B cell (primary cell): ENCODE measurements at regions of chr17 and their contacts with region 1.

Region 1: DNA sequence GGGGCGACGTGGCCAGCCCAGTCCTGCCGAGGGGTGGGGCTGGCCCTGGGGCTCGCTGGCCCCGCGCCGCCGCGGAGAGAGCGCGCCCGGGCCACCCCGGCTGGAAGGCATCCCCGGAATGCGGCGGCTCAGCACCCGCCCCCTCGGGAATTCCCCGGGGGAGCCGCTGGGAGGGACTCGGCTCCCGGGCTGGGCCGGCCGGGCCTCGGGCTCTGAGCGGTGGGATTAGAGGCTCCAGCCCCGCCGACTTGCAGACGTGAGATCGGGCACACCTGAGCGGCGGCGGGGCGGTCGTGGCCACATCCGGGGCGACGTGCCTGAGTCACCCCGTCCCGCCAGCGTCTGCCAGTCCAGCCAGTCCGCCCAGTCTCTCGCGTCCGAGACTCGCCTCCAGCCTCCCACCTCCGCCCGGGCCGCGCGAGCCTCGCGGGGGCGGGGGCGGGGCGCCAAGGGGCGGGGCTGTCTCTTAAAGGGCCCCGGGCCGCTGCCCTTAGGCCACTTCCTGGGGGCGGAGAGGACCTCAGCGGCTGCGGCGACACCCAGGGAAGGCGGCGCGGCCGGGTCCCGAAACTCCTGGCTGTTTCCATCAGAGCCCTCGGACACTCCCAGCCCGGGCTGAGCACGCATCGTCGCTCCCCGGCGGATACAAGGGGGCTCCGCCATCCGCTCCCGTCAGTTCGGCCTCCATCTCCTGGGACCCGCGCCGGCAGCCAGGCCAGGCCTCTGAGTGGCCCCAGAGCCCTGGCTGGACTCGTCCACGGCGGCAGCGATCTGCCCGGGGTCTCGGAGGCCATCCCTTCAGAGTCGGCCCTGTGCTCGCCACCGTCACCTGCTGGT is at the start of gene KCTD11:
- DNase-seq: peak; percentile 78
- ATAC-seq: peak; percentile 67
- H3K4me3 ChIP-seq: peak within 1 kb of the TSS; percentile 35 to 92 (median 84)
- H3K4me3 Mint-ChIP-seq: peak within 1 kb of the TSS; percentile 94
- H3K27ac ChIP-seq: peak within 1 kb of the TSS; percentile 63 to 90
- H3K27ac Mint-ChIP-seq: peak within 1 kb of the TSS; percentile 91
- H3K4me1 ChIP-seq: peaks cover 14 to 41% of the 10 kb centered on the region in 2 donors
- H3K4me1 Mint-ChIP-seq: peaks cover 38% of the 10 kb centered on the region
- H3K27me3 ChIP-seq: no peaks in the 10 kb centered on the region
- H3K27me3 Mint-ChIP-seq: no peaks in the 10 kb centered on the region
- CTCF ChIP-seq: peak; percentile 50
- total RNA-seq, gene KCTD11: 13.4 and 15.4 TPM in 2 replicates

Region 2: DNA sequence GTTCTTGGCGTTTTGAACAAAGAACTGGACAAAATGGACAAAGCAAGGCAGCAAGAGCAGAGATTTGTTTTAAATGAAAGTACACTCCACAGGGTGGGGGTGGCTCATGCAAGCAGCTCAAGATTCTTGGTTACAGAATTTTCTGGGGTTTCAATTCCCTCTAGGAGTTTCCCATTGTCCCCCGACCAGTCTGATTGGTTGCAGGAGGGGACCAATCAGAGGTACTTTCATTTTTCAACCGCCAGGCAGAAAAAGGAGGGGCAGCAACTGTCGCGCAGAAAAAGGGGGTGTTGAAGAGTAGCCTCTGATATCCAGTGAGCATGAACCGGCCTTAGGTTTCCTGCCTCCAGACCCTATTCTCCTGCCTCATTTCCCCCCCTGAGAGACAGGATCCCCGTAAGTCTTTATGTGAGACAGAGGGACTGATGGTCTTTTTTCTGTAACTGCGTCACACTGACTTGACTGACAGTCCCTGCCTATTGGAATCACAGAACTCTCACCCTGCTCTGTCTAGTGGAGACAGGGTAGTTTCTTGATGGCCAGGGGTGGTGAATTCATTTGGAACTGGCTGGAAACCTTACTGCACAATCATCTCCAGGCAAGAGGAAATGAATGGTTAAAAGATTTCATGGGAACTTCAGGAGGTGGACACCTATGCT is 415.4 kb before region 1 on chr17:
- CTCF ChIA-PET with region 1: no interaction called
- POLR2A ChIA-PET with region 1: no interaction called
- intact Hi-C with region 1: no loop called
- DNase-seq: peak; percentile 63
- ATAC-seq: peak; percentile 83
- H3K4me3 ChIP-seq: peak overlapping the region in 4 of 5 experiments; percentile 31 to 53 (median 40)
- H3K4me3 Mint-ChIP-seq: peak overlapping the region; percentile 64
- H3K27ac ChIP-seq: peak overlapping the region; percentile 72 to 78
- H3K27ac Mint-ChIP-seq: peak overlapping the region; percentile 84
- H3K4me1 ChIP-seq: no peaks in the 10 kb centered on the region
- H3K4me1 Mint-ChIP-seq: peaks cover 6% of the 10 kb centered on the region
- H3K27me3 ChIP-seq: no peaks in the 10 kb centered on the region
- H3K27me3 Mint-ChIP-seq: no peaks in the 10 kb centered on the region
- CTCF ChIP-seq: no peak

Region 3: GRCh38 chr17:7186241-7186640 is 165.6 kb before region 1 on chr17:
- CTCF ChIA-PET with region 1: no interaction called
- POLR2A ChIA-PET with region 1: no interaction called
- intact Hi-C with region 1: no loop called
- DNase-seq: peak; percentile 16
- ATAC-seq: no peak
- H3K4me3 ChIP-seq: no peak overlapping the region
- H3K4me3 Mint-ChIP-seq: no peak overlapping the region
- H3K27ac ChIP-seq: no peak overlapping the region
- H3K27ac Mint-ChIP-seq: no peak overlapping the region
- H3K4me1 ChIP-seq: no peaks in the 10 kb centered on the region
- H3K4me1 Mint-ChIP-seq: peaks cover 3% of the 10 kb centered on the region
- H3K27me3 ChIP-seq: no peaks in the 10 kb centered on the region
- H3K27me3 Mint-ChIP-seq: peaks cover 8% of the 10 kb centered on the region
- CTCF ChIP-seq: no peak

Region 4: DNA sequence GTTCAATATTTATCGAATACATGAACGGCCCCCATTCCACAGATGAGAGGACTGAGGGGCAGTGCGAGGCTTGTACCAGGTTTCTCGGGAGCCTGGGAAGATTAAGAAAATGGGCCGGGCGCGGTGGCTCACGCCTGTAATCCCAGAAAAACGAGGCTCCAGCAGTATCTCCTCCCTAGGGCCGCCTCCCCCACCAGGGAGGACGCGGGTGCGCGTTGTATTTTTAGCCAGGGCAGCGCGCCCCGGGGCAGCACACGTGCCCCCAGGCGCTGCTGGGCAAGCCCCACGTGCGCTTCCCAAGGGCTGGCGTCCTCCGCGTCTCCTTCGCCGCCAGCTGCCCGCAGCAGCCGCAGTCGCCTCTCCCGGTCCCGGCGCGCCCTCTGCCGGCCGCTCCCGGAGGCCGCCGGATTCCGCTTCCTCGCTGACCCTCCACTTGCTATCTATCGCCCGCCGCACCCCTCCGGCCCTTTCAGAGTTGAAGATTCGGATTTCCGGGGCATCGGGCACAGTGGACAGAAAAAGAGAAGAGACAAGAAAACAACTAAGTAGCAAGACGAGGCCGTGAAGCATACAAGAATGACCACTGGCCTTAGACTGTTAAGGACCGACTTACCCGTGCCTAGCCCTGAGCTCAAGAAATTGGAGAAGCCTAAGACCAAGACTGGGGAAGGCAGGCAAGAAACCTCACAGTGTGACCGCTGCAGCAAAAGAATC is 55.5 kb before region 1 on chr17:
- CTCF ChIA-PET with region 1: interaction called, 30 read pairs
- POLR2A ChIA-PET with region 1: interaction called, 6 read pairs
- intact Hi-C with region 1: no loop called
- DNase-seq: peak; percentile 84
- ATAC-seq: peak; percentile 58
- H3K4me3 ChIP-seq: peak overlapping the region in 2 of 5 experiments; percentile 12 to 14
- H3K4me3 Mint-ChIP-seq: peak overlapping the region; percentile 83
- H3K27ac ChIP-seq: no peak overlapping the region
- H3K27ac Mint-ChIP-seq: peak overlapping the region; percentile 47
- H3K4me1 ChIP-seq: peaks cover 28 to 30% of the 10 kb centered on the region in 2 donors
- H3K4me1 Mint-ChIP-seq: peaks cover 22% of the 10 kb centered on the region
- H3K27me3 ChIP-seq: peaks cover 0 to 52% (median 14%) of the 10 kb centered on the region in 4 experiments
- H3K27me3 Mint-ChIP-seq: peaks cover 36% of the 10 kb centered on the region
- CTCF ChIP-seq: peak; percentile 93

Region 5: DNA sequence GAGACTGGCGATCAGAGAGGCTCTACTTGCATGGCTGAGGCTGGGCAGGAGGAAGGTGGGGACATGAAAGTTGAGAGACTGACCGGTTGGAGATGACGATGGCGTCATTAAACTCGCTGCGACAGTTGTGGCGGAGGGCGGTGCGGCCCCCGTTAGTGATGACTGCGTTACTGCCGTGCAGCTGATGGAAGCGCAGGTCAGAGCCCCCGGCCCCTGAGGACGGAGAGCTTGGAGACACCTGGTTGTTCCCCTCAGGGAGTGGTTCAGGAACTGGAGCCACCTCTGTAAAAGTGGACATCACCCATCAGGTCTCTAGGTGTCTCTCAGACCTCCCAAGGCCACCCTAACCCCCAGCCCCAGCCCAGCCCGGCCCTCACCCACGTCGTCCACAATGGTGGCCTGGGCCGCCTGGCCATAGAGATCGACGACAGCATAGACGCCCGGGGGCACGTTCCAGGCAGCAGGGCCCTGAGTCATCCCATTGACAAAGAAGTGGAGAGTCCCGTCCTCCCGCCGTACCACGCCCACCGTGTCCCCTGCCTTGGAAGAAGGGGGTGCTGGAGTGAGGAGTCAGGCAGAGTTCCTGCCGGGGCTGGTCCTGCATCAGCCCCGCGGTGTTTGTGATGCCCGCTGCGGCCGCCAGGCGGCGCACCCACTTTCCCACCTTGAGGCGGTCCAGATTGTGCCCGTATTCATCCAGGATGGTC is 28.0 kb before region 1 on chr17:
- CTCF ChIA-PET with region 1: interaction called, 47 read pairs
- POLR2A ChIA-PET with region 1: interaction called, 17 read pairs
- intact Hi-C with region 1: loop called (anchors 1 kb)
- DNase-seq: peak; percentile 75
- ATAC-seq: peak; percentile 37
- H3K4me3 ChIP-seq: no peak overlapping the region
- H3K4me3 Mint-ChIP-seq: no peak overlapping the region
- H3K27ac ChIP-seq: no peak overlapping the region
- H3K27ac Mint-ChIP-seq: peak overlapping the region; percentile 20
- H3K4me1 ChIP-seq: peaks cover 7 to 13% of the 10 kb centered on the region in 2 donors
- H3K4me1 Mint-ChIP-seq: peaks cover 17% of the 10 kb centered on the region
- H3K27me3 ChIP-seq: no peaks in the 10 kb centered on the region
- H3K27me3 Mint-ChIP-seq: no peaks in the 10 kb centered on the region
- CTCF ChIP-seq: peak; percentile 91

Region 6: DNA sequence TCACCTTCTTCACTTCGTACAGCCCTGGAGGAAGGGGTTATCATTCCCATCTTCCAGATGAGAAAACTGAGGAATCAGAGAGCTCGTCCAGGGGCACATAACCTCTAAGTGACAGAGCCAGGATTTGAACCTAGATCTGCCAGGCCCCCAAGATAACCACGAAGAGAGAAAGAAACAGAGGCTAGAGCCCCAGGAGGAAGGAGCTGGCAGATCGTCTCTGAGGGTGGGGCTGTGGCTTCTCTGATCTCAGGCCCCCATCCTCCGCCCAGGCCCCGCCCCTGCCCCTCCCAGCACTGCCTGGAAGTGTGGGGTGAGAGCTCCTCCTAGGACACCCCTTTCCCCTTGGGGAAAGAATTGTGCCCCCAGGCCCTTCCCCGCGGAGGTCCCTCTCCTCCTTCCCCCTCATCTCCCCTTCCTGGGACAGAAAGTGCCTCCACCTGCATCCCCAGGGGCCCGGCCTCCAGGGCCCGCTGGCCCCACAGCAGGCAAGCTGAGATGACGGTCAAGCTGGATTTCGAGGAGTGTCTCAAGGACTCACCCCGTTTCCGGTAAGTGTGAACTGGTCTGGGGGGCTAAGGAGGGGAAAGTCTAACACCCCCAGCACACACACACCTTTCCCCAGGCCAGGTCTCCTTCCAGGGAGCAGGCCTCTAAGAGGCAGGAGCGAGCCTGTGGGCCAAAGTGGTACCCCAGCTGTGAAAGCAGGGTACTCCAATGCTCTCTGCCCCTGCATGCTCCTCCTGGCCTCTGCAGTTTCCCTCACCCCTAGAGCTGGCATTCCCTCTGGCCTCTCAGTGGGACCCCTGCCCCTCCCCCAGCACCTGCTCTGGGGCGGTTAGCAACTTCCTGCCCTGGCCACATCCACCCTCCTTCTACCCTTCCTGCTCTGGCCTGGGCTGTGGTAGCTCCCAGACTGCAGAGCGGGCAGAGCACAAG is 15.4 kb before region 1 on chr17 and contains the start of gene ACAP1:
- CTCF ChIA-PET with region 1: interaction called, 53 read pairs
- POLR2A ChIA-PET with region 1: interaction called, 7 read pairs
- intact Hi-C with region 1: no loop called
- DNase-seq: peak; percentile 83
- ATAC-seq: peak; percentile 96
- H3K4me3 ChIP-seq: peak within 1 kb of the TSS; percentile 57 to 93 (median 87)
- H3K4me3 Mint-ChIP-seq: peak within 1 kb of the TSS; percentile 89
- H3K27ac ChIP-seq: peak within 1 kb of the TSS; percentile 67 to 79
- H3K27ac Mint-ChIP-seq: peak within 1 kb of the TSS; percentile 96
- H3K4me1 ChIP-seq: peaks cover 25 to 64% of the 10 kb centered on the region in 2 donors
- H3K4me1 Mint-ChIP-seq: peaks cover 47% of the 10 kb centered on the region
- H3K27me3 ChIP-seq: no peaks in the 10 kb centered on the region
- H3K27me3 Mint-ChIP-seq: no peaks in the 10 kb centered on the region
- CTCF ChIP-seq: no peak
- total RNA-seq, gene ACAP1: 371 and 392 TPM in 2 replicates

Region 7: GRCh38 chr17:7403977-7404736 is 52.3 kb after region 1 on chr17 and contains the start of gene TMEM256:
- CTCF ChIA-PET with region 1: interaction called, 10 read pairs
- POLR2A ChIA-PET with region 1: interaction called, 4 read pairs
- intact Hi-C with region 1: loop called (anchors 1 kb)
- DNase-seq: peak; percentile 98
- ATAC-seq: peak; percentile 87
- H3K4me3 ChIP-seq: peak within 1 kb of the TSS; percentile 57 to 95 (median 82)
- H3K4me3 Mint-ChIP-seq: peak within 1 kb of the TSS; percentile 98
- H3K27ac ChIP-seq: peak within 1 kb of the TSS; percentile 45 to 59
- H3K27ac Mint-ChIP-seq: peak within 1 kb of the TSS; percentile 94
- H3K4me1 ChIP-seq: peaks cover 17 to 20% of the 10 kb centered on the region in 2 donors
- H3K4me1 Mint-ChIP-seq: peaks cover 22% of the 10 kb centered on the region
- H3K27me3 ChIP-seq: peaks cover 0 to 27% (median 4%) of the 10 kb centered on the region in 4 experiments
- H3K27me3 Mint-ChIP-seq: peaks cover 17% of the 10 kb centered on the region
- CTCF ChIP-seq: no peak
- total RNA-seq, gene TMEM256: 64.5 and 67.8 TPM in 2 replicates

Region 8: GRCh38 chr17:7515911-7516610 is 164.2 kb after region 1 on chr17:
- CTCF ChIA-PET with region 1: interaction called, 18 read pairs
- POLR2A ChIA-PET with region 1: no interaction called
- intact Hi-C with region 1: no loop called
- DNase-seq: no peak
- ATAC-seq: no peak
- H3K4me3 ChIP-seq: no peak overlapping the region
- H3K4me3 Mint-ChIP-seq: no peak overlapping the region
- H3K27ac ChIP-seq: no peak overlapping the region
- H3K27ac Mint-ChIP-seq: no peak overlapping the region
- H3K4me1 ChIP-seq: no peaks in the 10 kb centered on the region
- H3K4me1 Mint-ChIP-seq: no peaks in the 10 kb centered on the region
- H3K27me3 ChIP-seq: no peaks in the 10 kb centered on the region
- H3K27me3 Mint-ChIP-seq: no peaks in the 10 kb centered on the region
- CTCF ChIP-seq: no peak

Region 9: DNA sequence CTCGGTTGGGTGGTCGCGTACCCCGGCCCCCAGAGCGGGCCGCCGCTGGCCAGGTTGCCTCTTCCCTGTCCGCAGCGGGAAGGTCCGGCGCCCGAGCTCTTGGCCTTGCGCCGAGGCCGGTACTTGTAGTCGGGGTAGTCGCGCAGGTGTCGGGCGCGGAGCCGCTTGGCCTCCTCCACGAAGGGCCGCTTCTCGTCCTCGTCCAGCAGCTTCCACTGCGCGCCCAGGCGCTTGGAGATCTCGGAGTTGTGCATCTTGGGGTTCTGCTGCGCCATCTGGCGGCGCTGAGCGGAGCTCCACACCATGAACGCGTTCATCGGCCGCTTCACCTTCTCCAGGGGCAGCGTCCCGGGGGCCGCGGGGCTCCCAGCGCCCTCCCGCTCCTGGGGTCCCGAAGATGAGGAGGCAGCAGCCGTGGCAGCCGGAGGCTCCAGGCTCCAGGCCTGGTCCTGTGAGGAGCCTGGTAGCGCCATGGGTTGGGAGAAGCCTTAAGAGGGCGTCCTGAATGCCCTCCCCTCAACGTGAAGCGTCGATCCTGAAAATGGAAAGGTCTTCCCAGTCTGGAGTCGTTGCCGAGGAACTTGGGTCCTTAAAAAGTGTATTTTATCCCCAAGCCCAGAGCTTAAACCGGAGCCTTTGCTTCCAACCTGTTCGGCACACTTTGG is 237.5 kb after region 1 on chr17:
- CTCF ChIA-PET with region 1: interaction called, 34 read pairs
- POLR2A ChIA-PET with region 1: no interaction called
- intact Hi-C with region 1: loop called (anchors 1 kb)
- DNase-seq: peak; percentile 84
- ATAC-seq: peak; percentile 86
- H3K4me3 ChIP-seq: no peak overlapping the region
- H3K4me3 Mint-ChIP-seq: no peak overlapping the region
- H3K27ac ChIP-seq: no peak overlapping the region
- H3K27ac Mint-ChIP-seq: no peak overlapping the region
- H3K4me1 ChIP-seq: peaks cover 7 to 21% of the 10 kb centered on the region in 2 donors
- H3K4me1 Mint-ChIP-seq: peaks cover 10% of the 10 kb centered on the region
- H3K27me3 ChIP-seq: no peaks in the 10 kb centered on the region
- H3K27me3 Mint-ChIP-seq: no peaks in the 10 kb centered on the region
- CTCF ChIP-seq: peak; percentile 91